Right ventricle myocardium inferior (tissue), 1 donor: ENCODE measurements at regions of chr11 and their contacts with region 1.

Region 1: GRCh38 chr11:130002846-130003716 is 446 bp upstream of the PRDM10 start:
- DNase-seq: peak; percentile 97
- ATAC-seq: peak; percentile 92

Region 2: GRCh38 chr11:129779342-129779741 is 223.7 kb before region 1 on chr11:
- intact Hi-C with region 1: no loop called
- DNase-seq: no peak
- ATAC-seq: no peak

Region 3: GRCh38 chr11:129930296-129930695 is 72.8 kb before region 1 on chr11:
- intact Hi-C with region 1: loop called (anchors 1 kb)
- DNase-seq: no peak
- ATAC-seq: no peak

Region 4: GRCh38 chr11:130069684-130070108 is 66.6 kb after region 1 on chr11 and contains the start of gene APLP2:
- intact Hi-C with region 1: loop called (anchors 1 kb)
- DNase-seq: peak; percentile 99
- ATAC-seq: peak; percentile 97
- total RNA-seq, gene APLP2: 285 TPM

Region 5: DNA sequence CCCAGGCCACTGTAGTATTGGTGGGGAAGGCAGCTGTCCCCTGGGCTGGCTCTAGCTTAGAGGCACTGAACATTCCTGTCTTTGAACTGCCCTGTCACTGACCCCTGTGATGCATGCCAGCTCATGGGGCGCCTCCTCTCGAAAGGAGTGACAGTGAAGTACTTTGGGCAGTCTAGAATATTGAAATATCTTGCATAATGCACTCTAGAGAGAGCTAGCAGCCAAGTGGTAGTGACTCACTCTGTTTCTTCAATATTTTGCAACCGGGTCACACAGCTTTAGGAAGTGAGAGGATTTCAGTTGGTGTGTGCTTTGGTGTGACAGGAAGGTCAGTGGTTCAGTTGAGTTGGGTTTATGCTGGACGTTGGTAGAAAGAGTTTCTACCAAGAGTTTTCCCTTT is 121.0 kb after region 1 on chr11:
- intact Hi-C with region 1: loop called (anchors 2 kb)
- DNase-seq: peak; percentile 88
- ATAC-seq: peak; percentile 96

Region 6: GRCh38 chr11:130314750-130315285 is 311.7 kb after region 1 on chr11 and contains the start of gene ZBTB44:
- intact Hi-C with region 1: loop called (anchors 5 kb)
- DNase-seq: peak; percentile 97
- ATAC-seq: peak; percentile 98
- total RNA-seq, gene ZBTB44: 41.5 TPM